ENCODE measurements at regions of chr3 and their contacts with region 1.

Region 1: GRCh38 chr3:51669241-51670052 is 1.6 kb upstream of the TEX264 start:
- DNase-seq: peak; percentile 91
- H3K4me3 ChIP-seq: no peak overlapping the region
- H3K27ac ChIP-seq: peak overlapping the region; percentile 1; the same call in 1 of the 2 replicates
- H3K4me1 ChIP-seq: peaks cover 6% of the 10 kb centered on the region
- H3K27me3 ChIP-seq: no peaks in the 10 kb centered on the region

Region 2: GRCh38 chr3:51501833-51502561 is 167.4 kb before region 1 on chr3:
- in situ Hi-C with region 1: loop called (anchors 10 kb)
- DNase-seq: peak; percentile 81
- H3K4me3 ChIP-seq: no peak overlapping the region
- H3K27ac ChIP-seq: no peak overlapping the region
- H3K4me1 ChIP-seq: peaks cover 7% of the 10 kb centered on the region
- H3K27me3 ChIP-seq: no peaks in the 10 kb centered on the region

Measured in GM23248 (cell line).